ENCODE measurements at regions of chr16 and their contacts with region 1.

Region 1: GRCh38 chr16:3134564-3135417 is at the start of gene ZNF213:
- DNase-seq: peak; percentile 74 to 97 (median 93)
- ATAC-seq: peak; percentile 96 to 99 (median 98)
- H3K4me3 ChIP-seq: peak within 1 kb of the TSS; percentile 74 to 84
- H3K4me3 Mint-ChIP-seq: peak within 1 kb of the TSS; percentile 86 to 99 (median 98)
- H3K27ac ChIP-seq: peak within 1 kb of the TSS; percentile 79
- H3K27ac Mint-ChIP-seq: peak within 1 kb of the TSS; percentile 98
- H3K4me1 ChIP-seq: peaks cover 16 to 47% of the 10 kb centered on the region in 2 experiments
- H3K4me1 Mint-ChIP-seq: peaks cover 30 to 36% (median 30%) of the 10 kb centered on the region in 3 donors
- H3K27me3 ChIP-seq: no peaks in the 10 kb centered on the region
- H3K27me3 Mint-ChIP-seq: no peaks in the 10 kb centered on the region
- total RNA-seq, gene ZNF213: 3.1 to 16.9 (median 12.8) TPM

Region 2: DNA sequence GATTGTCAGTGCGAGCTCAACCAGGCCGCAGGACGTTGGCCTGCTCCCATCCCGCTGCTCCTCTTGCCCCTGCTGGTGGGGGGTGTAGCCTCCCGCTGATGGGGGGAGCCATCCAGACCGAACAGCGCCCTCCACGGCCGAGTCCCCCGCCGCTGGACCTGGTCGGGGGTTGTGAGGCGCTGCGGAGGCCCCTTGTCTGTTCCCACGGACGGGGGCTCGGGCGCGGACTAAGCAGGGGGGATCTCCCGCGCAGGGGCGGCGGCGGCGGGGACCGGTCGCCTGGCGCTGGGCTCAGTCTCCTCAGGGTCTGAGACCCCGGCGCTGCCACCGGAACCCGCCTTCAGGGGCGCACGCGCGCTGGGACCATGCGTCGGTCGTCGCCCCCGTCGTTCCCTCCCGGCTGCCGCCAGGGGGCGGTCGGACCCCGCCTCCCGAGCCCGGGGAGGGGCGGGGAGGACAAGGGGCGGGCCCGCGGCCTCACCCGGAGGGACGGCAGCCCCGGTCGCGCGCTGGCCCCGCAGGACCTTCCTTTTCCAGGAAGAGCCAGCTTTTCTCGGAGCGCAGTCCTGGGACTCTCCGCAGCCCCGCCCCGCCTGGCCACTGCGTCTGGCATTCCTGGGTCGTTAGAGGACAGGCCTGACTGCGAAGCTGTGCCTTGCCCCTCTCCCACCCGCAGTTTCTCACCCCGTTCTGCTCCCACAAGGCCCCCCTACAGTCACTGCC is 75.6 kb before region 1 on chr16:
- CTCF ChIA-PET with region 1: interaction called in 1 of 2 experiments, 39 read pairs
- POLR2A ChIA-PET with region 1: interaction called, 3 to 7 read pairs
- DNase-seq: peak; percentile 59 to 94 (median 80)
- ATAC-seq: peak; percentile 85 to 90 (median 88)
- H3K4me3 ChIP-seq: peak overlapping the region; percentile 80 to 91
- H3K4me3 Mint-ChIP-seq: peak overlapping the region; percentile 83 to 88 (median 87)
- H3K27ac ChIP-seq: peak overlapping the region; percentile 74
- H3K27ac Mint-ChIP-seq: peak overlapping the region; percentile 91 to 93
- H3K4me1 ChIP-seq: peaks cover 13 to 61% of the 10 kb centered on the region in 2 experiments
- H3K4me1 Mint-ChIP-seq: peaks cover 47 to 69% (median 54%) of the 10 kb centered on the region in 3 donors
- H3K27me3 ChIP-seq: no peaks in the 10 kb centered on the region
- H3K27me3 Mint-ChIP-seq: no peaks in the 10 kb centered on the region

Region 3: DNA sequence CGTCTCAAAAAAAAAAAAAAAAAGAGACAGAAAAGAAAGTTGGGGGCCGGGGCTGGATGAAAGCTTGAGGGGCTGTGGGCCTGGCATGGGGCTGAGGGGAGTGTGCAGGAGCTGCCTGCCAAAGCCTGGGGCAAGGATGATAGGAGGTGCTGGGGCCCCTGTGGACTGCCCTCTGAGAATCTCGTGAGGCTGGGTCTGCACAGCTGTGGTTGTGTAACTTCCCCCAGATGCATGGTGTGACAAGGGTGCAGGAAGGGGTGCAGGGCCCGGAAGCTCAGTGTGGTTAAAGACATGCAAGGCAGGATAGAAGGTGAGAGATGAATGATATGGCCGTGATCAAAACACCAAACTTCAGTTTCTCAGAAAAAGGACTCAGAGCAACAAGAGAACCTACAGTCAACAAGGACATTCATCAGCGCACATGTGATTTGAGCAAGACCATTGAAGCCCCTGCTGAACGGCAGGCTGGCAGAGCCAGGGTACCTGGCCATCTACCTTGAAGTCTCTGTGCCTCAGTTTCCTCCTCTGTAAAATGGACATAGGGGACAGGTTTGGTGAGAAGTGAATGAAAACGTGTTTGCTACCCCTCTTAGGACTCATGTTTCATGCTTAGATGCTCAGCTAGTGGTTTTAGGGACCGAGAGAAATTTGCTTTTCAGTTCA is 59.8 kb before region 1 on chr16:
- CTCF ChIA-PET with region 1: interaction called in 1 of 2 experiments, 8 read pairs
- POLR2A ChIA-PET with region 1: interaction called in 1 of 2 experiments, 15 read pairs
- DNase-seq: peak; percentile 67 to 94 (median 86)
- ATAC-seq: peak; percentile 84 to 93 (median 88)
- H3K4me3 ChIP-seq: peak overlapping the region; percentile 4 to 38
- H3K4me3 Mint-ChIP-seq: peak overlapping the region; percentile 65 to 75 (median 73)
- H3K27ac ChIP-seq: peak overlapping the region; percentile 93
- H3K27ac Mint-ChIP-seq: peak overlapping the region; percentile 98 to 100
- H3K4me1 ChIP-seq: peaks cover 36 to 92% of the 10 kb centered on the region in 2 experiments
- H3K4me1 Mint-ChIP-seq: peaks cover 88 to 93% (median 88%) of the 10 kb centered on the region in 3 donors
- H3K27me3 ChIP-seq: no peaks in the 10 kb centered on the region
- H3K27me3 Mint-ChIP-seq: no peaks in the 10 kb centered on the region

Region 4: DNA sequence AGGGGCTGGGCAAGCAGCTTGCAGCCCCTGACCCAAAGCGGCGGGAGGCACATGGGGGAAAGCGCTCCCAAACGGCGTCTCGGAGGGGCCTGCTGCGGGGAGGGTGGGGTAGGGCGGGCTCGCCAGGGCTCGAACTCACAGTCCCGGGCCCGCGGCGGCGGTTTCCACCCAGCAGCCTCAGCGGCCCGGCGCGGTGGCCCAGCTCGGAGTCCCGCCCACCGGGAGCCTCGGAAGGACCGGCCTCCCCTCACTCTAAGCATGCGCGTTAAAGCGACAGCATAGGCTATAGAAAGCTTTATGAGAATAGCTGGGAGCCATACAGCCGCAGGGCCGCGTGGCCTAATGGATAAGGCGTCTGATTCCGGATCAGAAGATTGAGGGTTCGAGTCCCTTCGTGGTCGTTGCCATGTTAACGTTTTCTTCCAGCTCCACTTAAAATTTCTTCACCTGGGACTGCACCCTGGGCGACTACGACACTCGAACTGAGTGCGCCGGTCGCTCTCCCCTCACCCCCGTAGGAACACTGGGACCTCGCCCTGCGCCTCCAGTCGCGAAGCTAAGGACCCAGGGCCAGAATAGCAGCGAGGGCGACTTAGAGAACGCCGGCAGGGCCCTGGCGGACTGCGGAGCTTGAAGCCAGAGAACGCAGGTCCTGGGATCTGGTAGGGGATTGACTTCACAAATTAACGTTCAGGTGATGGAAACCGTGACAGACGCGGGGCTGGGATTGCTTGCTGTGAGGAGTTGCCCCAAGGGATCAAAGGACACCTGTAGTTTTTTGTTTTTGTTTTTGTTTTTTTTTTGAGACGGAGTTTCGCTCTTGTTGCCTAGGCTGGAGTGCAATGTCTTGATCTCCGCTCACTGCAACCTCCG is 15.8 kb after region 1 on chr16:
- CTCF ChIA-PET with region 1: interaction called, 3 to 14 read pairs
- POLR2A ChIA-PET with region 1: interaction called in 1 of 2 experiments, 5 read pairs
- DNase-seq: peak; percentile 88 to 100 (median 94)
- ATAC-seq: peak; percentile 84 to 88 (median 88)
- H3K4me3 ChIP-seq: peak overlapping the region; percentile 83 to 84
- H3K4me3 Mint-ChIP-seq: peak overlapping the region; percentile 85 to 93 (median 86)
- H3K27ac ChIP-seq: peak overlapping the region; percentile 75
- H3K27ac Mint-ChIP-seq: peak overlapping the region; percentile 87 to 90
- H3K4me1 ChIP-seq: peaks cover 4 to 38% of the 10 kb centered on the region in 2 experiments
- H3K4me1 Mint-ChIP-seq: peaks cover 20 to 27% (median 22%) of the 10 kb centered on the region in 3 donors
- H3K27me3 ChIP-seq: peaks cover 0 to 17% of the 10 kb centered on the region in 2 experiments
- H3K27me3 Mint-ChIP-seq: peaks cover 0 to 5% of the 10 kb centered on the region in 2 donors

Region 5: GRCh38 chr16:3876695-3877094 is 741.9 kb after region 1 on chr16:
- CTCF ChIA-PET with region 1: no interaction called
- POLR2A ChIA-PET with region 1: interaction called in 1 of 2 experiments, 11 read pairs
- DNase-seq: no peak
- ATAC-seq: no peak
- H3K4me3 ChIP-seq: no peak overlapping the region
- H3K4me3 Mint-ChIP-seq: peak overlapping the region; percentile 91 to 94 (median 93)
- H3K27ac ChIP-seq: no peak overlapping the region
- H3K27ac Mint-ChIP-seq: no peak overlapping the region
- H3K4me1 ChIP-seq: peaks cover 39 to 73% of the 10 kb centered on the region in 2 experiments
- H3K4me1 Mint-ChIP-seq: peaks cover 76 to 79% (median 77%) of the 10 kb centered on the region in 3 donors
- H3K27me3 ChIP-seq: peaks cover 0 to 3% of the 10 kb centered on the region in 2 experiments
- H3K27me3 Mint-ChIP-seq: no peaks in the 10 kb centered on the region

Measured in T-cell (primary cell).